Caco-2 (cell line): ENCODE measurements at regions of chr17 and their contacts with region 1.

Region 1: DNA sequence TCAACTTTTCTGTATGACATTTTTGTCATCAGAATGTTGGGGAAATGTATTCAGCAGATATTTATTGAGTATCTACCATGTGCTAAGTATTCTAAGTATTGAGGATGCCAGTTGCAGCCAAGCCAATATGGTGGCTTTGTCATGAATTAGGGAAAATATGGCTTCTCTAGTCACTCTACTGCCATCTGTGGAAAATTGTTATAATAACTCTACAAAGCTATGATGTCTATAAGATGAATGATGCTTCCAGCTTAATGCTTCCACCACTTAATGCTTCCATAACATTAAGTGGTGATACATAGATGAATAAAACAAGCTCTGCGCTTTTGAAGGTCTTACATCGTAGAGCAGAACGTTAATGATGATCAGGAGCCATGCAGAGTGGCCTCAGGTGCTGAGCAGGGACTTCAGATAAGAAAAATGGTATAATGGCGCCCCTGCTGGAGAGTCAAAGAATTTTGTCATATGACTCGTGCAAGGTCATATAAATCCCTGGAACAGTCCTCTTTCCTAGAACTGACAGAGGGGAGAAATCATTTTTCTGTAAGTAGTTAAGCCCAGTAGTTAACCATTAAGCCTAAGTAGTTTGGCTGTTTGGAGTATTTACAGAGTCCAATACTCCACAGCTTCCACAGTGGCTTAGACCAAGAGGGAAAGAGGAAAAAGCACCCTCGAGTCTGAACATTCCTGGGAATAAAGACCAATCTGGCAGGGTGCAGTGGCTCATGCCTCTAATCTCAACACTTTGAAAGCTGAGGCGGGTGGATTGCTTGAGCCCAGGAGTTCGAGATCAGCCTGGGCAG is 2.7 kb upstream of the TMIGD1 start:
- DNase-seq: peak; percentile 82 to 85
- H3K4me3 ChIP-seq: no peak overlapping the region
- H3K4me3 Mint-ChIP-seq: peak overlapping the region; percentile 48
- H3K27ac Mint-ChIP-seq: peak overlapping the region; percentile 78
- H3K4me1 ChIP-seq: peaks cover 56% of the 10 kb centered on the region
- H3K4me1 Mint-ChIP-seq: peaks cover 57% of the 10 kb centered on the region
- H3K27me3 ChIP-seq: no peaks in the 10 kb centered on the region
- H3K27me3 Mint-ChIP-seq: no peaks in the 10 kb centered on the region
- CTCF ChIP-seq: peak; percentile 60 to 92

Region 2: DNA sequence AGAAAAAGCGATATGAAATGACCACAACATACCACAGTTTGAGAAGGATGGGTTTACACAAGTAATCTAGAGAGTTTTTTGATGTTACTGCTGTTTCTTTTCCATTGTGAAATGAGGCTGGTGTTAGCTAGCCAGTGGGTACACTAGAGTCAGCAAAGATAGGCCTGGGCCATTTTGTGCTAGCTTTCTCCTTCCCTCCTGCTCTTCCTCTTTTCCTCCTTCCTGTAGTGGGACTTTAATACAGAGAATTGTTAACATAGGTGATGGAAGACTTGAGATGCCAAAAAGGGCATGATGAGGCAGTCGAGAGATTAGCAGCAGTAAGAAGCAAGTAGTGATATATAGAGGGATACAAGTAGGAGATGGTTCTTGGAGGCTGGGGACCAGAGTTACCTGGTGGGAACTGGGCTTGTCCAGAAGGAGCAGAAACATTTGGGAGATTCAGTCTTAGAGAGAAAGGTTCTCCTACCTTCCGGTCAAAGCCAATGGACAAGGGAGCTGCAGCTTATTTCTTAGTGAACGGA is 212.2 kb before region 1 on chr17:
- CTCF ChIA-PET with region 1: interaction called, 18 read pairs
- POLR2A ChIA-PET with region 1: no interaction called
- intact Hi-C with region 1: loop called (anchors 1 kb)
- DNase-seq: no peak
- H3K4me3 ChIP-seq: no peak overlapping the region
- H3K4me3 Mint-ChIP-seq: no peak overlapping the region
- H3K27ac Mint-ChIP-seq: no peak overlapping the region
- H3K4me1 ChIP-seq: no peaks in the 10 kb centered on the region
- H3K4me1 Mint-ChIP-seq: no peaks in the 10 kb centered on the region
- H3K27me3 ChIP-seq: no peaks in the 10 kb centered on the region
- H3K27me3 Mint-ChIP-seq: no peaks in the 10 kb centered on the region
- CTCF ChIP-seq: no peak

Region 3: GRCh38 chr17:30278032-30278431 is 58.5 kb before region 1 on chr17:
- CTCF ChIA-PET with region 1: interaction called, 3 read pairs
- POLR2A ChIA-PET with region 1: no interaction called
- intact Hi-C with region 1: loop called (anchors 1 kb)
- DNase-seq: peak; percentile 46 to 58
- H3K4me3 ChIP-seq: no peak overlapping the region
- H3K4me3 Mint-ChIP-seq: no peak overlapping the region
- H3K27ac Mint-ChIP-seq: no peak overlapping the region
- H3K4me1 ChIP-seq: no peaks in the 10 kb centered on the region
- H3K4me1 Mint-ChIP-seq: no peaks in the 10 kb centered on the region
- H3K27me3 ChIP-seq: no peaks in the 10 kb centered on the region
- H3K27me3 Mint-ChIP-seq: no peaks in the 10 kb centered on the region
- CTCF ChIP-seq: peak; percentile 62 to 72

Region 4: GRCh38 chr17:30299000-30299399 is 37.6 kb before region 1 on chr17:
- CTCF ChIA-PET with region 1: no interaction called
- POLR2A ChIA-PET with region 1: no interaction called
- intact Hi-C with region 1: loop called (anchors 1 kb)
- DNase-seq: no peak
- H3K4me3 ChIP-seq: no peak overlapping the region
- H3K4me3 Mint-ChIP-seq: no peak overlapping the region
- H3K27ac Mint-ChIP-seq: no peak overlapping the region
- H3K4me1 ChIP-seq: no peaks in the 10 kb centered on the region
- H3K4me1 Mint-ChIP-seq: no peaks in the 10 kb centered on the region
- H3K27me3 ChIP-seq: no peaks in the 10 kb centered on the region
- H3K27me3 Mint-ChIP-seq: no peaks in the 10 kb centered on the region
- CTCF ChIP-seq: peak; percentile 15 to 16

Region 5: GRCh38 chr17:30310562-30310961 is 26.0 kb before region 1 on chr17:
- CTCF ChIA-PET with region 1: no interaction called
- POLR2A ChIA-PET with region 1: no interaction called
- intact Hi-C with region 1: no loop called
- DNase-seq: no peak
- H3K4me3 ChIP-seq: no peak overlapping the region
- H3K4me3 Mint-ChIP-seq: no peak overlapping the region
- H3K27ac Mint-ChIP-seq: no peak overlapping the region
- H3K4me1 ChIP-seq: 0 out of 2 replicates have a peak, but pooled peaks cover 4% of the 10 kb centered on the region
- H3K4me1 Mint-ChIP-seq: peaks cover 13% of the 10 kb centered on the region
- H3K27me3 ChIP-seq: no peaks in the 10 kb centered on the region
- H3K27me3 Mint-ChIP-seq: no peaks in the 10 kb centered on the region
- CTCF ChIP-seq: no peak

Region 6: GRCh38 chr17:30405161-30405560 is 68.6 kb after region 1 on chr17:
- CTCF ChIA-PET with region 1: interaction called, 11 read pairs
- POLR2A ChIA-PET with region 1: interaction called, 3 read pairs
- intact Hi-C with region 1: no loop called
- DNase-seq: peak in 1 of 2 experiments; percentile 63
- H3K4me3 ChIP-seq: no peak overlapping the region
- H3K4me3 Mint-ChIP-seq: peak overlapping the region; percentile 62
- H3K27ac Mint-ChIP-seq: peak overlapping the region; percentile 84
- H3K4me1 ChIP-seq: peaks cover 36% of the 10 kb centered on the region
- H3K4me1 Mint-ChIP-seq: peaks cover 49% of the 10 kb centered on the region
- H3K27me3 ChIP-seq: no peaks in the 10 kb centered on the region
- H3K27me3 Mint-ChIP-seq: no peaks in the 10 kb centered on the region
- CTCF ChIP-seq: no peak

Region 7: DNA sequence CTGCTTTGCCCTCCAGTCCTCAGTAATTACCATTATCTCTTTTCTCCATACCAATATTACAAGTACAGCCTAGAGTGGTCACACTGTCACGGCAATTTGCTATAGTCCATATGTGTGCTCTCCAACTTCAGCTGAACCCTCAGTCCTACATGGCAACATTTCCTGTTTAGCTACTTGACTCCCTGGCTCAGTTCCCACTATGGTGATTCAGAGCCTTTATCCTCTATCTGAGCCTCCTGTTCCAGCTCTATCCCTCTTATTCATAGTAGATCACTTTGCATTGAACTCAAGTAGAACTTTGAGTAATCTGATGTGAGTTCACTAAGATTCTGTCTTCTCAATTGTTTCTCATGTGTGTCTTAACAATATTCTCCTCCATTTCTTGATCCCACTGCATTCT is 96.9 kb after region 1 on chr17:
- CTCF ChIA-PET with region 1: no interaction called
- POLR2A ChIA-PET with region 1: no interaction called
- intact Hi-C with region 1: no loop called
- DNase-seq: no peak
- H3K4me3 ChIP-seq: no peak overlapping the region
- H3K4me3 Mint-ChIP-seq: no peak overlapping the region
- H3K27ac Mint-ChIP-seq: no peak overlapping the region
- H3K4me1 ChIP-seq: no peaks in the 10 kb centered on the region
- H3K4me1 Mint-ChIP-seq: peaks cover 6% of the 10 kb centered on the region
- H3K27me3 ChIP-seq: no peaks in the 10 kb centered on the region
- H3K27me3 Mint-ChIP-seq: no peaks in the 10 kb centered on the region
- CTCF ChIP-seq: no peak